ENCODE measurements at regions of chr5 and their contacts with region 1.

Region 1: DNA sequence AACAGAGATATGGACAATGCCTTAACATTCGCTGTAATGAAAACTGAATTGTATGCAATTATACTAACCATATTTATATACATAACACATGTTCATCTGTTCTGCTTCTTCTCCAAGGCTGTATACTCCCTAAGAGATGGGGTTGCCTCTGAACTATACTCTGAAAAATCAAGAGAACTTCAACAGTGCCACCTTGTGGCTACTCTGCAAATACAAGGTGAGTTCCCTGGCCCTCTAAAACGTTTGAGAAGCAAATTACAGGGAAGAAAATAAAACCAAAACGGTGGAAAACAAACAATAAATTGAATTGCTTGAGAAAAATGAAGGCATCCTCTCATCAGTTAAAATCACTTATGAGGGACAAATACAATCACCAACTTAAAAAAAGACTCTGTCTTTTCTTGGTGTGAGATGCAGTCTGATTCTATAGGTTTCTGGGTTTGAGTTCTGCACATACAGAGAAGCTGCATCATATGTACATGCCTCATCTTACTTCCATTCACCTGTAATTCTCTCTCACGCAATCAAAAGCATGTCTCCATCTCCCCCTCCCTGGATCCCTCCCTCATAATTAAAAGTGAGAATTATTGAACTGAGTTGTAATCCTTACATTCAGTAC is 98.6 kb downstream of the FBXW11 start:
- DNase-seq: peak; percentile 86
- H3K4me3 Mint-ChIP-seq: no peak overlapping the region
- H3K27ac Mint-ChIP-seq: peak overlapping the region; percentile 76
- H3K4me1 Mint-ChIP-seq: peaks cover 36% of the 10 kb centered on the region
- H3K27me3 Mint-ChIP-seq: no peaks in the 10 kb centered on the region

Region 2: GRCh38 chr5:171484460-171484899 is 423.4 kb before region 1 on chr5:
- intact Hi-C with region 1: loop called (anchors 1 kb)
- DNase-seq: peak; percentile 75
- H3K4me3 Mint-ChIP-seq: no peak overlapping the region
- H3K27ac Mint-ChIP-seq: no peak overlapping the region
- H3K4me1 Mint-ChIP-seq: peaks cover 3% of the 10 kb centered on the region
- H3K27me3 Mint-ChIP-seq: peaks cover 3% of the 10 kb centered on the region

Region 3: GRCh38 chr5:171882118-171882517 is 25.7 kb before region 1 on chr5:
- intact Hi-C with region 1: loop called (anchors 1 kb)
- DNase-seq: no peak
- H3K4me3 Mint-ChIP-seq: no peak overlapping the region
- H3K27ac Mint-ChIP-seq: no peak overlapping the region
- H3K4me1 Mint-ChIP-seq: peaks cover 17% of the 10 kb centered on the region
- H3K27me3 Mint-ChIP-seq: no peaks in the 10 kb centered on the region

Region 4: GRCh38 chr5:171946000-171946774 is 38.4 kb after region 1 on chr5:
- intact Hi-C with region 1: no loop called
- DNase-seq: no peak
- H3K4me3 Mint-ChIP-seq: no peak overlapping the region
- H3K27ac Mint-ChIP-seq: no peak overlapping the region
- H3K4me1 Mint-ChIP-seq: peaks cover 19% of the 10 kb centered on the region
- H3K27me3 Mint-ChIP-seq: no peaks in the 10 kb centered on the region

Region 5: DNA sequence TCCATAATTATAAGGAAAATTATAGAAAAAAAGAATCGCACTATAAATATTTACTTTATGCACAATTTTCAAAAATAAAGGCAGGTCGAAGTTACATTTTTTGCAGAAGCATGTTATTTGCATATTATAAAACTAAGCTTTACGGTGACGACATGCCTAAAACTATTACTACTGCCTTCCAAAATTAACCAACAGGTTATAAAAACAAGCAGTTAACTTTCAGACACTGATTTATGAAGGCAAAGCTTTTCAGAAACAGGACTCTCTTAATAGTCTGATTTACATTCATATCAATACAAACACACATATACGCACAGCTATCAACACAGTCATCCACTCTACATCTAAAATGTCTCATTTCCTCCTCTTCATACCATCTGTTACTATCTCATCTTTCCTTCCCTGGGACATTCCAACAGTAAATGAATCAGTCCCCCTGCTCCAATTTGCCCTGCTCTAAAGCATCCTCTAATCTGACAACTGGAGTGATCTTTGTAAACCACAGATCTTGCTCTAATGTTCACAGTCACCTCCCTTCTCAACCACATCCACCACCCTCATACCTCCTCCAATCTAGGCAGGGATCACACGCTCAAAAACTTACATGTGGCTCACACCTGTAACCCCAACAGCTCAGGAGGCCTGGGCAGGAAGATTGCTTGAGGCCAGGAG is 77.0 kb after region 1 on chr5:
- intact Hi-C with region 1: loop called (anchors 1 kb)
- DNase-seq: peak; percentile 79
- H3K4me3 Mint-ChIP-seq: no peak overlapping the region
- H3K27ac Mint-ChIP-seq: peak overlapping the region; percentile 30
- H3K4me1 Mint-ChIP-seq: peaks cover 34% of the 10 kb centered on the region
- H3K27me3 Mint-ChIP-seq: no peaks in the 10 kb centered on the region

Region 6: DNA sequence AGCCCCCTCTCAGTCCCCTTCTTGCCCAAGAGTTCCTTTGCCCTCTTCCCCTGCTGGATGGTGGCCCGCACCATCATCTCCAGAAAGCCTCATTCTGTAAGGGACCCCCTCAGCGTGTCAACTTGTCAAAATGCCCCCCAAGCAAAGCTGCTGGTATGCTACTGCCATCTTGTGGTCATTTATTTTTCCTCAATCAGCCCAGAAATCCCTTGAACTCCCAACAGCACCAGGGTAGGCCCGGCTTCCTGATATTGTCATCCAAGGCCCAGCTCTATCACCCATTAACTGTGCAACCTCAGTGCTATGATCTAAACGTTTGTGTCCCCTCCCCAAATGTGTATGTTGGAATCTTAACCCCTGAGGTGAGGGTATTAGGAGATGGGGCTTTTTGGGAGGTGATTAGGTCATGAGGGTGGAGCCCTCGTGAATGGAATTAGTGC is 151.8 kb after region 1 on chr5:
- intact Hi-C with region 1: loop called (anchors 1 kb)
- DNase-seq: no peak
- H3K4me3 Mint-ChIP-seq: no peak overlapping the region
- H3K27ac Mint-ChIP-seq: peak overlapping the region; percentile 76
- H3K4me1 Mint-ChIP-seq: peaks cover 10% of the 10 kb centered on the region
- H3K27me3 Mint-ChIP-seq: no peaks in the 10 kb centered on the region

Region 7: GRCh38 chr5:172283020-172283861 is 375.4 kb after region 1 on chr5 and contains the start of gene UBTD2:
- intact Hi-C with region 1: loop called (anchors 5 kb)
- DNase-seq: peak; percentile 95
- H3K4me3 Mint-ChIP-seq: peak within 1 kb of the TSS; percentile 89
- H3K27ac Mint-ChIP-seq: peak within 1 kb of the TSS; percentile 81
- H3K4me1 Mint-ChIP-seq: peaks cover 23% of the 10 kb centered on the region
- H3K27me3 Mint-ChIP-seq: peaks cover 25% of the 10 kb centered on the region
- total RNA-seq, gene UBTD2: 5.5 and 6.3 TPM in 2 replicates